MCF 10A (cell line): ENCODE measurements at regions of chr16 and their contacts with region 1.

Region 1: DNA sequence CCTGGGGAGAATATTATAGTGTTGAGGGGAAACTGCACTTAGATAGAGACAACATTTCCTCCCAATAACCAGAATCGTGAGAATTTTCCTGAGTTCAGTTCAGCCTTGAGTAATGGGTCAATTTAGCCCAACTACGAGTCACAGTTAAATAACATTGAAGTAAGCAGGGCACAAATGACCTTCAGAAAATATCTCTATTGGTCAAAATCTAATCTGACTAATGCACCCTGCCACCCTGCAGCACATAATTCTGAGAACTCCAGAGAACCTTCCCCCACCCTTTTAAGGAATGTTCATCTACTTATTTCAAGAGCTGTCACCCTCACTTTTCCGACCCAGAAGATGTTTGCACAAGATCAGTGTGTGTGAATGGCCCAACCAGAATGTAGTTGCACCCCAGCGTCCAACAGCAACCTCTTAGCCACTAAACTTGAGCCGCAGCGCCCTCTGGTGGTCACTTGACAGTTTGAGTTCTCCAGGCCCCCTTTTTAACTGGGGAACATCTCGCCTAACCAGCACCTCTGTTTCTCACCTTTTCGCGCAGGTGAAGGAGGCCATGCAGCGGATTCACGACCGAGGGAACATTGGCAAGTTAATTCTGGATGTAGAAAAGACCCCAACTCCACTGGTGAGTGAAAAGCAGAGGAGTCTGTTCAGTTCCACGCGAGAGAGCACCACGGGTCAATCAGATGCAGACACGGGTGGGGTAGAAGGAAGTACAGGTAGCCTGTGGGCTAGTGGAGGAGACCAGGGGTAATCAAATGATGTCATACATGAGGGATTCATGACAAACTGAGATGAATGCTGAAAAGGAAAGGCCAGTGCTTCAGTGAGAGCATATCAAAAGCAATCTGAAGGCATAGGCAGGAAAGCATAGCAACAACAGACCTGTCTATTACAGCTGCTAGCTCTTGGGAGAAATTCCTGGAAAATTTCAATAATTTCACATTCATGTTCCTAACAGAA is 50.8 kb upstream of the CLEC3A start:
- DNase-seq: peak; percentile 90
- H3K4me3 Mint-ChIP-seq: no peak overlapping the region
- H3K27ac Mint-ChIP-seq: no peak overlapping the region
- H3K4me1 Mint-ChIP-seq: peaks cover 7% of the 10 kb centered on the region
- H3K27me3 Mint-ChIP-seq: peaks cover 2% of the 10 kb centered on the region
- CTCF ChIP-seq: peak; percentile 85

Region 2: GRCh38 chr16:77584205-77584859 is 387.3 kb before region 1 on chr16:
- CTCF ChIA-PET with region 1: interaction called, 11 read pairs
- POLR2A ChIA-PET with region 1: no interaction called
- intact Hi-C with region 1: no loop called
- DNase-seq: peak; percentile 77
- H3K4me3 Mint-ChIP-seq: no peak overlapping the region
- H3K27ac Mint-ChIP-seq: no peak overlapping the region
- H3K4me1 Mint-ChIP-seq: peaks cover 11% of the 10 kb centered on the region
- H3K27me3 Mint-ChIP-seq: peaks cover 31% of the 10 kb centered on the region
- CTCF ChIP-seq: peak; percentile 87

Region 3: GRCh38 chr16:77675464-77676324 is 295.9 kb before region 1 on chr16:
- CTCF ChIA-PET with region 1: interaction called, 124 read pairs
- POLR2A ChIA-PET with region 1: interaction called, 3 read pairs
- intact Hi-C with region 1: loop called (anchors 1 kb)
- DNase-seq: peak; percentile 78
- H3K4me3 Mint-ChIP-seq: no peak overlapping the region
- H3K27ac Mint-ChIP-seq: no peak overlapping the region
- H3K4me1 Mint-ChIP-seq: no peaks in the 10 kb centered on the region
- H3K27me3 Mint-ChIP-seq: peaks cover 7% of the 10 kb centered on the region
- CTCF ChIP-seq: peak; percentile 80

Region 4: DNA sequence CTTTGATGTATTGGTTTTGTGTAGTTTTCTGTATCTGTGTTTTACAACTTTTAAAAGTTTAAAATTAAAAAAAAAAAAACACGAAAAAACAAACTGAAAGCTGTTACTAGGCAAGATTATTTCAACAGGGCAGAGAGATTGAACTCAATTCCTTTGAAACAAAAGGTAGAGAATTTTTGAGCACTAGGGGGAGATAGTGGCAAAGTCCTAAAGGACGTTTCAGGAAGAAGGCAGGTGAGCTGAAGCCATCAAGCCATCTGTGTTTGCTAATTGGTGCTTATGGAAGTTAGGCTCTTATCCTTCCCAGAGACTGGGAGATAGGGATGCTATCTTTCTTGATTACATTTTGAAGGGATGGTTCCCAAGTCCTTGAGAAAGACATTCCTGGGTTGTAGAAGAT is 19.8 kb before region 1 on chr16:
- CTCF ChIA-PET with region 1: interaction called, 44 read pairs
- POLR2A ChIA-PET with region 1: no interaction called
- intact Hi-C with region 1: loop called (anchors 1 kb)
- DNase-seq: peak; percentile 47
- H3K4me3 Mint-ChIP-seq: no peak overlapping the region
- H3K27ac Mint-ChIP-seq: no peak overlapping the region
- H3K4me1 Mint-ChIP-seq: no peaks in the 10 kb centered on the region
- H3K27me3 Mint-ChIP-seq: no peaks in the 10 kb centered on the region
- CTCF ChIP-seq: peak; percentile 35

Region 5: GRCh38 chr16:77993111-77993985 is 21.8 kb after region 1 on chr16:
- CTCF ChIA-PET with region 1: interaction called, 22 read pairs
- POLR2A ChIA-PET with region 1: no interaction called
- intact Hi-C with region 1: no loop called
- DNase-seq: peak; percentile 9
- H3K4me3 Mint-ChIP-seq: no peak overlapping the region
- H3K27ac Mint-ChIP-seq: no peak overlapping the region
- H3K4me1 Mint-ChIP-seq: peaks cover 10% of the 10 kb centered on the region
- H3K27me3 Mint-ChIP-seq: no peaks in the 10 kb centered on the region
- CTCF ChIP-seq: no peak

Region 6: GRCh38 chr16:78099372-78100161 is 128.0 kb after region 1 on chr16 and contains the start of gene WWOX:
- CTCF ChIA-PET with region 1: interaction called, 7 read pairs
- POLR2A ChIA-PET with region 1: no interaction called
- intact Hi-C with region 1: loop called (anchors 10 kb)
- DNase-seq: peak; percentile 99
- H3K4me3 Mint-ChIP-seq: peak within 1 kb of the TSS; percentile 94
- H3K27ac Mint-ChIP-seq: peak within 1 kb of the TSS; percentile 98
- H3K4me1 Mint-ChIP-seq: peaks cover 34% of the 10 kb centered on the region
- H3K27me3 Mint-ChIP-seq: no peaks in the 10 kb centered on the region
- CTCF ChIP-seq: peak; percentile 99
- total RNA-seq, gene WWOX: 15.5 and 18.1 TPM in 2 replicates